GM18951 (cell line): ENCODE measurements at regions of chr11 and their contacts with region 1.

Region 1: GRCh38 chr11:122505304-122506006 is 150.1 kb upstream of the UBASH3B start:
- POLR2A ChIP-seq: no peak

Region 2: DNA sequence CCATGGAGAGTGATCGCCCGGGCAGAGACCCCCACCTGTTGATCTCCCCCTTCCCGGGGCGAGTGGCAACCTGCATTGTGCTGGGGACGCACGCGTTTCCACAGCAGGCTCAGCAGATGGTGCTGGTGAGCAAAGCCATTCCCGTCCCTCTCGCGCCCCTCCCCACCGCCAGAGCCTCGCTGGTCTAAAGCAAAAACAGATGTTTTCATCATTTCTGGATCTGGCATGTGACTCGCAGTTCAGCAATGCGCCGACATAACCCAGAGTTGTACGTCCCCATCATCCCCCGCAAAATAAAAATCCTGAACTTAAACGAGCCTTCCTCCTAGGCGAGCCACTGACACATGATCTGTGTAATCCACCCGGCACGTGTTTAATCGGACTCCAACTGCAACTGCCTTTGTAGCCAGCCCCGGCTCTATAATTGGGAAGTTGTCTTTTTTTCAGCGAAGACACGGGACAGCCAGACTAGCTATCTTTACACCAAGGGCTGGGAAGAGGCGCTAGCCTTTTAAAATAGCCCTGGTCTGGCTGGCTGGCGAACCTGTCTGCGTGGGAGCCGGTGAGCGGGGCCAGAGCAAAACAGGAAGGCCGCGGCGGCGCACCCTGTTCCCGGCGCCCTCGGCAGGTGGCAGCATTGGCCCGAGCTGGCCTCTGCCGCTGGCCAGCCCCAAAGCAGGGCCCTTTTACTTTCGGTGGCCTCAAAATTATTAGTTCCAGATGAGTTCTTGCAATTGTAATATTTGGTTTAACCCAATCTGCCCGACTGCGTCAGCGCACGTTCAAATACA is 849.7 kb before region 1 on chr11:
- in situ Hi-C with region 1: loop called (anchors 25 kb)
- POLR2A ChIP-seq: no peak

Region 3: DNA sequence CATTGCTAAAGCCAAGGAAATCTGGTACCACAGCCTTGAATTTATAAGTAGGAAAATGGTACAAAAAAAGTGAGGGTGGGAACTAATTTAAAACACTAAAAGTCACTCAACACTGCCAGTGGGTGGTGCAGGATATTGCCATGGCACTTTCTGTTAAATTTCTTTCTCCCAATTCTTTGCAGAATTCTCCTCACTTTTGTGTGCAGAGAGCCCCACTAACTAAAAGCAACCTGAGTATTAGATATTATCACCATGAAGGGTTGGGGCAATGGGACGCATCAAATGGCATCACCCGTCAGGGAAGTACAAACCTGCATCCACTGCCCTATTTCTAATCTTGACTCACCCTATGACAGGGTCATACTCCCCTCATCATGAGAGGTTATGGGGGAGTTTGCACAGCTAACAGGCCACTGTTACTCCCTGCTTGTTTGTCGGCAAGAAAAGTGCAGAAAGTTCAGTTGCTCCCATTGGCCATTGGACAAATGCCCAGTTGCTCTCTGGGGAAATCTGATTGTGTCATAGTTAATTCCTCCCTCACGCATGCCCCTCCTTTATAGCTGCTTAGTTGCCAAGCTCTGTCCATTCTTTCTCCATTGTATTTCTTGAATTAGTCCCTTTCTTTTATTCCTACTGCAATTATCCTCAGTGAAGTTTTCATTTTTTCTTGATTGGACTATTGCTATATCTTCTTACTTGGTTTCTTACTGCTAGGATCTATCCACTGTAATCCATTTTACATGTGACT is 295.7 kb before region 1 on chr11:
- in situ Hi-C with region 1: loop called (anchors 5 kb)
- POLR2A ChIP-seq: no peak

Region 4: DNA sequence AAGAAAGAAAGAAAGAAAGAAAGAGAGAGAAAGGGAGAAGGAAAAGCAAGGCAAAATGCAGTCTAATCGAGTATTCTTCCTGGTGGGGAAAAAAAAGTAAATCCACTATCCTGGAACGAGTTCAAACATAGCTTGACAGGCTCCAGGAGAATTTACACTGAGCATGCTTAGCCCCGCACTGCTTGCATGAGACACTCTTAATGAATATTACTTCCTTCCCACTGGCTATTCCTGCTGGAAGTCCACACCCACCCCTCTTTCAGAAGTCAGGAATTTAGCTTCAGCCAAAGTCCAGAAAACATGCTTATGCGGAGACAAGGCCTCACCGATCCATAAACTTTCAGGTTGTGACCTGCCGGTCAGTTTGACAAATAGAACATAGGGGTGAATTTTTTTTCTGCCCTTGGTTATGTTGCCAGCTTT is 137.6 kb before region 1 on chr11:
- in situ Hi-C with region 1: no loop called
- POLR2A ChIP-seq: no peak

Region 5: GRCh38 chr11:122617297-122617696 is 111.8 kb after region 1 on chr11:
- in situ Hi-C with region 1: no loop called
- POLR2A ChIP-seq: no peak